ENCODE measurements at regions of chr18 and their contacts with region 1.

Region 1: DNA sequence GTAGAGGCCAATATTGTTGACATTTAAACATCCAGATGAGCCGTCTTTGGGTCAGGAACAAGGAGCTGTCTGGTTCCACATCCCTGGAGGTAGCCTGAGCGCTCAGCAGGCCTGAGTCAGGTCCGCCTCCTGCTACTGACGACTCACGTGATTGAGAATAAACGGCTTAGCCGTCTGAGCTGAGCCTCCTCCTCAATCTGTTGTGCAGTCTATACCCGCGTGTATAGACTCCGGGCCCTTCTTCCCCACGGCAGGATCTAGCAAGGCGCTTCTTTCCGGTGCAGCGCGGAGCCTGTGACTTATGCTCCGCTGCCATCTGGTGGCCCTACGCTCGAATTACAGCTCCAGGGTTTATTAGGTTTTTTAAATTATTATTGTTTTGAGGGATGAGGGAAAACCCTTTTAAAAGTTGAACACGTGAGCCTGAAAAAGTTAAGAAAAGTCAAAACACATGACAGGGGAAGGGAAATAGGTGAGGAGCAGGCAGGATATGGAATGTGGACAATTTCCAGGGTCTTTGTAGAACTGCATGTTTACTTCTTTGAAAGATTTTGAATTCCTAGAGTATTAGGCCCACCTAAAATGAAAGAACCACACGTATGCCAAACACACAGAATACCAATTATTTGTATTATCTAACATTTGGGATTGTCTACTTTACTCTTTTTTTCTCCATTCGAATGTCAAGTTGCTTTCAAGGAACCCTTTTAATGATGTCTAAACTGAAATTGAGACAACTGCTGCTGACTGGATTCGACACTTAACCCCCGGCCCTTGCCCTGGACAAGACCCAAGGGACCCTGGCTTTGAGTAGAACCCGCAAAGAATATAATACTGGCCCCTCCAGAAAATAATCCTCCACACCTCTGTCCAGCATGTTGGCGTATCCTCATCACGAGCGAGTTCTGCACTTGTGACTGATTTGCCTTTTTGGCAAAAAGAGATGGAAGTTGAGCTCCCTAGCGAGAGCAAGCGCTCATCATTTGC is 112.4 kb upstream of the ZNF236 start:
- DNase-seq: peak; percentile 81
- H3K4me3 ChIP-seq: peak overlapping the region in 1 of 2 experiments; percentile 14; a peak in 1 of 4 replicates
- H3K27ac ChIP-seq: no peak overlapping the region
- H3K4me1 ChIP-seq: no peaks in the 10 kb centered on the region; a peak in 1 of 4 replicates
- H3K27me3 ChIP-seq: no peaks in the 10 kb centered on the region
- CTCF ChIP-seq: peak; percentile 90
- EP300 ChIP-seq: no peak
- RAD21 ChIP-seq: peak; percentile 93

Region 2: DNA sequence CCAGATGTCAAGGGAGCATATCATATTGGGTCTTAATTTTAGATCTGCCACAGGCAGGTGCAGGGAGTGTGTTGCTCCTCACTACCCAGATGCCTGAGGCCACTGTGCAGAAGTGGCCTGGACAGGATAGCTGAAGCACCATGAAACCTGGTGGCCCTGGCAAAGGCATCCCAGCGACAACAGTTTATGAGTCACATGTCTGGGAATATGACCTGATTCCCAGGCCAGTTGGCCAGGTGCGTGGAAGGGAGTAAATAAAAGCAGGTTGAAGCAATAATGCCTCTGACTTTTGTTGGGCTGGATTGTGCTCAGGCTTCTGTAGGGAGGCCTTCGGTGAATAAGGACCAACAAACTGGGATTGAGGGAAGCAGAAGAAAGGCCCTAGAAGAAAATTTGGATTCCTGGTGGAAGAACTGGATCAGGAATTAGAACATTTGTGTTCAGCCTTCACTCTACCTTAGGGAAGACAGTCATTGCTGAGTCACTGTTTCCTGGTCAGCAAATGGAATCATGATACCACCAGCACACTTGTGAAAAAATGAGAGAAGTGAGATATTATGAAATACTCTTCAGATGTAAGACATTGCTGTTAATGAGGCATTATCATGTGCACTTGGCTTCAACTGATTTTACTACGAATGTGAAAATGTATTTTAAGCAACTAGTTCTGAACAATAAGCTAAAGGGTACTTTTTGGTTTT is 136.5 kb before region 1 on chr18:
- CTCF ChIA-PET with region 1: no interaction called
- POLR2A ChIA-PET with region 1: no interaction called
- DNase-seq: no peak
- H3K4me3 ChIP-seq: no peak overlapping the region
- H3K27ac ChIP-seq: no peak overlapping the region
- H3K4me1 ChIP-seq: no peaks in the 10 kb centered on the region
- H3K27me3 ChIP-seq: no peaks in the 10 kb centered on the region
- CTCF ChIP-seq: no peak
- EP300 ChIP-seq: no peak
- RAD21 ChIP-seq: no peak

Region 3: GRCh38 chr18:76658627-76659026 is 51.3 kb before region 1 on chr18:
- CTCF ChIA-PET with region 1: interaction called, 11 read pairs
- POLR2A ChIA-PET with region 1: no interaction called
- DNase-seq: peak; percentile 37
- H3K4me3 ChIP-seq: no peak overlapping the region
- H3K27ac ChIP-seq: no peak overlapping the region
- H3K4me1 ChIP-seq: peaks cover 0 to 15% of the 10 kb centered on the region in 2 experiments; a peak in 2 of 4 replicates
- H3K27me3 ChIP-seq: no peaks in the 10 kb centered on the region
- CTCF ChIP-seq: peak; percentile 19; the same call in 1 of the 2 replicates
- EP300 ChIP-seq: no peak
- RAD21 ChIP-seq: no peak; the same call in 1 of the 2 replicates

Region 4: DNA sequence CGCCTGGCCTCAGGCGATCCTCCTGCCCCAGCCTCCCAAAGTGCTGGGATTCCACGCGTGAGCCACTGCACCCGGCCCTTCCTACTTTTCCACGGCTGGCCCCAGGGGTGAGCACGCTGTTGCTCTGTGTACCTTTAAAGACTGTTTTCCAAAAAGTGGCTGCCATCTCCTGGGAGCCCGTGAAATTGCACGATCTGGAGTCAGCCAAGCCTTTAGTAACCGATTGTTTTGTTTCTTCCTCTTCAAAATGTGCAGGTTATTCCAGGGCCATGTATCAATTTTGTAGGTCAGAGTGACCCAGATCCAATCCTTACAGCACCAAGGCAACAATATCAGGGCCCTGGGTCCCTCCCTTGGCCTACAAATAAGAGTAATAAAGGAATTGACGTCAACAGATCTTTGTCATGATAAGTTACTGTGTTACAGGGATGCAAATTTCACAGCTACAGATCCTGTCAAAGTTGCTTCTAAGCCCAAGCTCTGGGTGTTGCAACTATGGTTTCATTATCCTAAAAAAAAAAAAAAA is 23.2 kb before region 1 on chr18:
- CTCF ChIA-PET with region 1: interaction called, 19 read pairs
- POLR2A ChIA-PET with region 1: no interaction called
- DNase-seq: peak; percentile 77
- H3K4me3 ChIP-seq: peak overlapping the region in 1 of 2 experiments; percentile 32; a peak in 1 of 4 replicates
- H3K27ac ChIP-seq: no peak overlapping the region
- H3K4me1 ChIP-seq: peaks cover 0 to 2% of the 10 kb centered on the region in 2 experiments; a peak in 1 of 4 replicates
- H3K27me3 ChIP-seq: no peaks in the 10 kb centered on the region; the same call in 1 of the 2 replicates
- CTCF ChIP-seq: peak; percentile 64
- EP300 ChIP-seq: no peak
- RAD21 ChIP-seq: peak; percentile 76

Region 5: GRCh38 chr18:76697441-76697901 is 12.5 kb before region 1 on chr18:
- CTCF ChIA-PET with region 1: interaction called, 27 read pairs
- POLR2A ChIA-PET with region 1: no interaction called
- DNase-seq: no peak
- H3K4me3 ChIP-seq: no peak overlapping the region
- H3K27ac ChIP-seq: no peak overlapping the region
- H3K4me1 ChIP-seq: no peaks in the 10 kb centered on the region
- H3K27me3 ChIP-seq: no peaks in the 10 kb centered on the region
- CTCF ChIP-seq: no peak
- EP300 ChIP-seq: no peak
- RAD21 ChIP-seq: no peak

Region 6: GRCh38 chr18:76721207-76721996 is 11.4 kb after region 1 on chr18:
- CTCF ChIA-PET with region 1: interaction called, 12 read pairs
- POLR2A ChIA-PET with region 1: no interaction called
- DNase-seq: no peak
- H3K4me3 ChIP-seq: no peak overlapping the region
- H3K27ac ChIP-seq: no peak overlapping the region
- H3K4me1 ChIP-seq: no peaks in the 10 kb centered on the region
- H3K27me3 ChIP-seq: no peaks in the 10 kb centered on the region
- CTCF ChIP-seq: no peak
- EP300 ChIP-seq: no peak
- RAD21 ChIP-seq: no peak